ENCODE measurements at regions of chr7 and their contacts with region 1.

Region 1: DNA sequence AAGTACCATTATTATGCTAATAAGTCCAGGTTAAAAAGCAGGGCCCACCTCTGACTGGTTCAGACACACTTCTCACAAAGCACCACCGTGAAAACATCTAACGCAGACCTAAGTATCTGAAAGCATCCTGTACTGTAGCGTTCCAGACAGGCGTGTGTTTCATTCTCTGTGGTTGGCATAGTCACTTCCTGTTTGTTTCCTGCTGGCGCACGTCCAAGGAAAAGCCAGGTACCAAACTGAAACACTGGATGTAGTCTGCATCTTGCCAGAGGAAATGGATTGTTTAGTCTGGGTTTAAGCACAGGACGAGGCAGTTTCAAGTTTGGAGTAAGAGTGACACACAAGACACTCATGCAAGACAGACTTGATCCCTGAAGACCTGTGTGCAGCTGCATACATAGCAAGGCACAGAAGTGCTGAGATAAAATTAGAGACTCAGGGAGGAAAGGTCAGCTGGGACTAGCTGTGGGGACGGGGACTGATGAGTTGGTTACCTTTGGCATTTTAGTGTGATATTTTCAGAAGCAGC is 23.3 kb downstream of the BPGM start:
- DNase-seq: peak; percentile 81
- ATAC-seq: peak; percentile 77
- H3K4me3 Mint-ChIP-seq: peak overlapping the region; percentile 26
- H3K27ac Mint-ChIP-seq: peak overlapping the region; percentile 83
- H3K4me1 Mint-ChIP-seq: peaks cover 44% of the 10 kb centered on the region
- H3K27me3 Mint-ChIP-seq: no peaks in the 10 kb centered on the region
- CTCF ChIP-seq: no peak

Region 2: GRCh38 chr7:134654104-134654775 is 15.7 kb before region 1 on chr7:
- CTCF ChIA-PET with region 1: interaction called, 13 read pairs
- POLR2A ChIA-PET with region 1: interaction called, 25 read pairs
- intact Hi-C with region 1: no loop called
- DNase-seq: no peak
- ATAC-seq: peak; percentile 97
- H3K4me3 Mint-ChIP-seq: peak overlapping the region; percentile 24
- H3K27ac Mint-ChIP-seq: peak overlapping the region; percentile 90
- H3K4me1 Mint-ChIP-seq: peaks cover 42% of the 10 kb centered on the region
- H3K27me3 Mint-ChIP-seq: no peaks in the 10 kb centered on the region
- CTCF ChIP-seq: no peak

Region 3: GRCh38 chr7:134696254-134696653 is 26.3 kb after region 1 on chr7:
- CTCF ChIA-PET with region 1: no interaction called
- POLR2A ChIA-PET with region 1: no interaction called
- intact Hi-C with region 1: no loop called
- DNase-seq: no peak
- ATAC-seq: no peak
- H3K4me3 Mint-ChIP-seq: no peak overlapping the region
- H3K27ac Mint-ChIP-seq: no peak overlapping the region
- H3K4me1 Mint-ChIP-seq: peaks cover 10% of the 10 kb centered on the region
- H3K27me3 Mint-ChIP-seq: peaks cover under 1% of the 10 kb centered on the region
- CTCF ChIP-seq: no peak

Region 4: DNA sequence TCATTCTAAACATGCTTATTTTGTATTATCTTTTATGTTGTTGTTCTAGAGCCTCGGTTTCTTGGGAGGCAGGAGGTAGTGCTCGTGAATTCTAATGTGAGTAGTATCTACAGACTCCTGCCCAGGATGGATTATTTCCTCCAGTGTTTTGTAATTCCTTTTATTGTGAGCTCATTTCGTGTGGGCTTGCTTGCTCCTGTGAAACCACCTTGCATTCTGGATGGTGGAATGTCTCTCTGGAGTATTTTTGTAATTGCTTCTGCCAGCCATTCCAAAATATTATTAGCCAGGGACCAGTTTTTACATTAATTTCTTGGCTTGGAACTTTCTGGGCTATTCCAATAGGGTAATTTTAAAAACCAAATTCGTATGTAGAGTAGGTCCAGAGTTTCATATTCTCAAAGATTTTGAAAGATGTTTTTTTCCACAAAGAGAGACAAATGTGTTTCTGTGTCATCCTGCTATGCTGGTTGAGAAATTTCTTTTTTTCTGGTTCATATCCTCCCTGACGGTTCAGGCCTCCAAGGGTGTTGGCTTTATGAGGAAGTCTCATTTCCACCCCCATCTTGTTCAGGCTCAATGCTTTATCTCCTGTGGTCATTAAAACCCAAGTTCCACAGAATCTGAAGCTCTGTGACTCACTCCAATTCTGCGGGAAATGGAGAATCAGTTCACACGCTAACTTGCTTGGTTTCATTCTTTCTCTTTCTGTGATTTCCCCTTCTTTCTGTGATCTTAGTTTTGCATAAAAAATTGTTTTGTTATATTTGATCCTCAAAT is 67.8 kb after region 1 on chr7:
- CTCF ChIA-PET with region 1: no interaction called
- POLR2A ChIA-PET with region 1: no interaction called
- intact Hi-C with region 1: no loop called
- DNase-seq: peak; percentile 27
- ATAC-seq: peak; percentile 87
- H3K4me3 Mint-ChIP-seq: no peak overlapping the region
- H3K27ac Mint-ChIP-seq: peak overlapping the region; percentile 11
- H3K4me1 Mint-ChIP-seq: peaks cover 9% of the 10 kb centered on the region
- H3K27me3 Mint-ChIP-seq: peaks cover 2% of the 10 kb centered on the region
- CTCF ChIP-seq: no peak

Measured in activated CD8-positive, alpha-beta T cell treated with anti-CD3 and anti-CD28 coated beads for 36 hours (primary cell).